Adrenal gland (tissue), 19 donors: ENCODE measurements at regions of chr1 and their contacts with region 1.

Region 1: GRCh38 chr1:169586395-169587255 is at the start of gene F5:
- DNase-seq: peak; percentile 35 to 81 (median 68)
- H3K4me3 ChIP-seq: no peak within 1 kb of the TSS
- H3K27ac ChIP-seq: no peak within 1 kb of the TSS
- H3K4me1 ChIP-seq: peaks cover 0 to 9% of the 10 kb centered on the region in 2 donors
- H3K27me3 ChIP-seq: peaks cover 13% of the 10 kb centered on the region
- CTCF ChIP-seq: peak; percentile 23 to 57 (median 37)
- POLR2A ChIP-seq: no peak
- total RNA-seq, gene F5: under 0.01 to 0.39 (median 0.06) TPM in 5 of 9 donors, not detected in the others

Region 2: GRCh38 chr1:169217636-169218035 is 369.0 kb before region 1 on chr1:
- intact Hi-C with region 1: no loop called
- DNase-seq: no peak
- H3K4me3 ChIP-seq: no peak overlapping the region
- H3K27ac ChIP-seq: no peak overlapping the region
- H3K4me1 ChIP-seq: no peaks in the 10 kb centered on the region
- H3K27me3 ChIP-seq: no peaks in the 10 kb centered on the region
- CTCF ChIP-seq: no peak
- POLR2A ChIP-seq: no peak

Region 3: GRCh38 chr1:169271098-169271497 is 315.5 kb before region 1 on chr1:
- intact Hi-C with region 1: no loop called
- DNase-seq: no peak
- H3K4me3 ChIP-seq: no peak overlapping the region
- H3K27ac ChIP-seq: peak overlapping the region in 1 of 5 donors; percentile 10
- H3K4me1 ChIP-seq: peaks cover 7 to 9% of the 10 kb centered on the region in 2 donors
- H3K27me3 ChIP-seq: no peaks in the 10 kb centered on the region
- CTCF ChIP-seq: peak in 2 of 6 experiments; percentile 28 to 32
- POLR2A ChIP-seq: no peak

Region 4: DNA sequence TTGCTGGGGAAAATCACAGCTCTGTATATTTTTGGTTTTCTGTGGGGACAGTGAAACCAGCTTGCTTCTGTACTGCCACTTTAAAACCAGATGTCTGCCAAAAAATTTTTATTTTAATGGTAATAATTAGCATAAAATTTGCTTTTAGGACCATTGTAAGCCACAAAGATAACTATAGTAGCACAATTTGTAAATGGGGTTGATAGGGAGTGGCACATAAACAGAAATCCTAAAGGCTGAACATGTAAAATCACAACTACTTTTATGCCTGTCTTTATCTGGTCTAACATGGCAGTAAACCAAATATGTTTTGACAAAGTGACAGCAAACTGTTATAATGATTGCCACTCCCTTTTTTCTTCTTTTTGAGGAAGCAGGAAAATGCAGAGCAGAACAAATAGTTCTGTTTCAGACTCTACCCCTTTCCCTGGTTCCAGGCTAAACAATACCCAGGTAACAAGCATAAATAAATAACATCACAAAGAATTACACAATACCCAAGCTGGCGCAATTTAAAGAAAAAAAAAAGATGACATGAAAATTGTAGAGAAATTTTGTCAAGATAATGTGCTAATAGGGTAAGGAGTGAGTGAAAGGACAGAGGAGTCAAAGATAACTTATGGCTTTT is 135.3 kb before region 1 on chr1:
- intact Hi-C with region 1: no loop called
- DNase-seq: no peak
- H3K4me3 ChIP-seq: no peak overlapping the region
- H3K27ac ChIP-seq: no peak overlapping the region
- H3K4me1 ChIP-seq: no peaks in the 10 kb centered on the region
- H3K27me3 ChIP-seq: no peaks in the 10 kb centered on the region
- CTCF ChIP-seq: no peak
- POLR2A ChIP-seq: no peak

Region 5: GRCh38 chr1:169809370-169810095 is 222.9 kb after region 1 on chr1:
- intact Hi-C with region 1: loop called in 1 of 2 experiments (anchors 10 kb)
- DNase-seq: peak in 4 of 7 donors; percentile 17 to 34 (median 26)
- H3K4me3 ChIP-seq: no peak overlapping the region
- H3K27ac ChIP-seq: no peak overlapping the region
- H3K4me1 ChIP-seq: no peaks in the 10 kb centered on the region
- H3K27me3 ChIP-seq: no peaks in the 10 kb centered on the region
- CTCF ChIP-seq: peak; percentile 44 to 64 (median 53)
- POLR2A ChIP-seq: no peak